Sciatic nerve (tissue), 2 donors: ENCODE measurements at regions of chr2 and their contacts with region 1.

Region 1: GRCh38 chr2:220104871-220105351 is 477.5 kb downstream of the SLC4A3 start:
- DNase-seq: no peak
- ATAC-seq: peak; percentile 80

Region 2: GRCh38 chr2:220090004-220090403 is 14.9 kb before region 1 on chr2:
- intact Hi-C with region 1: no loop called
- DNase-seq: no peak
- ATAC-seq: no peak

Region 3: GRCh38 chr2:220736777-220737176 is 631.9 kb after region 1 on chr2:
- intact Hi-C with region 1: loop called (anchors 5 kb)
- DNase-seq: no peak
- ATAC-seq: no peak

Region 4: GRCh38 chr2:220811952-220812570 is 707.1 kb after region 1 on chr2:
- intact Hi-C with region 1: no loop called
- DNase-seq: no peak
- ATAC-seq: no peak